CD14-positive monocyte (primary cell): ENCODE measurements at regions of chr3 and their contacts with region 1.

Region 1: GRCh38 chr3:31265646-31266428 is 266.9 kb upstream of the STT3B start:
- DNase-seq: peak; percentile 73 to 90 (median 76)
- H3K4me3 ChIP-seq: peak overlapping the region in 1 of 3 experiments; percentile 29
- H3K4me3 Mint-ChIP-seq: peak overlapping the region in 1 of 2 donors; percentile 48
- H3K27ac ChIP-seq: peak overlapping the region; percentile 45 to 88
- H3K27ac Mint-ChIP-seq: peak overlapping the region; percentile 90 to 95 (median 92)
- H3K4me1 ChIP-seq: peaks cover 32 to 42% of the 10 kb centered on the region in 2 donors
- H3K4me1 Mint-ChIP-seq: peaks cover 42% of the 10 kb centered on the region
- H3K27me3 ChIP-seq: no peaks in the 10 kb centered on the region
- H3K27me3 Mint-ChIP-seq: peaks cover 0 to 2% (median 2%) of the 10 kb centered on the region in 3 donors
- CTCF ChIP-seq: peak; percentile 52

Region 2: GRCh38 chr3:31219131-31219843 is 46.5 kb before region 1 on chr3:
- intact Hi-C with region 1: loop called in 1 of 2 experiments (anchors 10 kb)
- DNase-seq: no peak
- H3K4me3 ChIP-seq: no peak overlapping the region
- H3K4me3 Mint-ChIP-seq: no peak overlapping the region
- H3K27ac ChIP-seq: no peak overlapping the region
- H3K27ac Mint-ChIP-seq: no peak overlapping the region
- H3K4me1 ChIP-seq: peaks cover 7 to 10% of the 10 kb centered on the region in 2 donors
- H3K4me1 Mint-ChIP-seq: peaks cover 29% of the 10 kb centered on the region
- H3K27me3 ChIP-seq: no peaks in the 10 kb centered on the region
- H3K27me3 Mint-ChIP-seq: peaks cover 0 to 3% (median 0%) of the 10 kb centered on the region in 3 donors
- CTCF ChIP-seq: no peak

Region 3: DNA sequence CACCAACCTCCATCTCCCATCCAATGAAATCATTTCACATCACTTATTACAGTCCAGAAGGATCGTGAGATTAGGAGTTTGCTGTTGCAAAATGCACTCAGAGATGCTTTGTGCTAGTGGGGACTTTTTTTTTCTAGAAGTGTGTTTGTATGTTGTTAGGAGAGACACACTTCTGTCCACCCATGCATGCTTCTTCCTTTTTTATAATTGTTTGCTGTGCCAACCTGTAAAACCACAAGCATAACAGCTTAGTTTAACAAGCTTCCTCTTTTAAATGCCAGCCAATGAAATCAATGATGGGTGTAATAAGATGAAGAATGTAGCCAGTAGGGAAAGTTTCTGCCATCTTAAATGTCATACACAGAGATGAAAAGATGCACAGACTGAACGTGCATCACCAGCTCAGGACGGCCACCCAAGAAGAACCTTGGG is 38.7 kb before region 1 on chr3:
- intact Hi-C with region 1: loop called (anchors 5 kb)
- DNase-seq: peak; percentile 86 to 94 (median 93)
- H3K4me3 ChIP-seq: no peak overlapping the region
- H3K4me3 Mint-ChIP-seq: no peak overlapping the region
- H3K27ac ChIP-seq: peak overlapping the region; percentile 0 to 84
- H3K27ac Mint-ChIP-seq: peak overlapping the region; percentile 85 to 97 (median 93)
- H3K4me1 ChIP-seq: peaks cover 57 to 63% of the 10 kb centered on the region in 2 donors
- H3K4me1 Mint-ChIP-seq: peaks cover 64% of the 10 kb centered on the region
- H3K27me3 ChIP-seq: no peaks in the 10 kb centered on the region
- H3K27me3 Mint-ChIP-seq: peaks cover 0 to 3% (median 2%) of the 10 kb centered on the region in 3 donors
- CTCF ChIP-seq: no peak

Region 4: DNA sequence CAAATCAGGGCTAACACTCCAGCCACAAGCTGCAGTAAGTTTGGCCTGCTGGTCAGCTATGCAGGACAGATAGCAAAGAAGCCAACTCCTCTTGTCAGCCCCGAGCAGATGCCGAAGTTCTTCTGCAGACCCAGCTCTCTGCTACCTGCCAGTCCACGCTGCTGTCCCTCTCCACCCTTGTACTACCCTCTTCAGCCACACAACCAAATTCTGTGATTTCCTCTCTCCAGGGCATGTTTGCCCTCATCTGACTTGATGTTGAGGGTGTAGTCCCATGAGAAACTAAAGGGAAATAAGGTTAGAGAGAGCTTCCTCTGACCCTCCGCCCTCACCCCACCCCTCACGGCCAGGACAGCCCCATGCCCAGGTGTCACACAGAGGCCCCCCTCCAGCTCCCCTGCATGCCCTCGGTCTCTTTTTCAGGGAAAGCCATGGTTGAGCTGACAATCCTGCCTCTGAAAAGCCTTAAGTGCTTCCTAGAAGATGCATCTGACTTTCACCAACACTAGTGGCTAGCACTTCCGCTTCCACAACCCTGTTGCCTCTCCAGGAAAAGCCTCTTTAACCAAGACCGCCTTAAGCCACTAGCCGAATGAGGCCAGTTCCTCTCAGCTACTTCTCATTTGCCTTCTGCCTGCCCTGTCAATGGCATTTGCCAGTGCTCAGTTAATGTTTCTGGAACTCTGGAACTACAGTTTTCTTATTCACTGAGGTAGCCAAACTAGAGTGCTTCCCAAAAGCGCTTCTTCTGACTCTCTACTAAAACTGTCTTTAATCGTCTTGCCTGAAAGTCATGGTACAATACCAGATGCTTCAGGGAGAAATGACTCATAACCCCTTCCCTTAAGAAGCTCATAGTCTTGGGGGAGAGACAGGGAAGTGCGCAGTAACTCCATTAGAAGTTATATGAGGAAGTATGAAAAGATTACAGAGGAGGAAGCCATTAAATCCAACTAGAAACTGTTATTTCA is 33.5 kb before region 1 on chr3:
- intact Hi-C with region 1: loop called (anchors 5 kb)
- DNase-seq: peak; percentile 88 to 96 (median 95)
- H3K4me3 ChIP-seq: peak overlapping the region in 1 of 3 experiments; percentile 45
- H3K4me3 Mint-ChIP-seq: peak overlapping the region; percentile 52 to 82
- H3K27ac ChIP-seq: peak overlapping the region; percentile 91 to 95
- H3K27ac Mint-ChIP-seq: peak overlapping the region; percentile 94 to 99 (median 98)
- H3K4me1 ChIP-seq: peaks cover 68 to 78% of the 10 kb centered on the region in 2 donors
- H3K4me1 Mint-ChIP-seq: peaks cover 67% of the 10 kb centered on the region
- H3K27me3 ChIP-seq: no peaks in the 10 kb centered on the region
- H3K27me3 Mint-ChIP-seq: peaks cover 0 to 5% (median 0%) of the 10 kb centered on the region in 3 donors
- CTCF ChIP-seq: peak; percentile 14